Transverse colon (tissue), 4 donors: ENCODE measurements at regions of chr16 and their contacts with region 1.

Region 1: DNA sequence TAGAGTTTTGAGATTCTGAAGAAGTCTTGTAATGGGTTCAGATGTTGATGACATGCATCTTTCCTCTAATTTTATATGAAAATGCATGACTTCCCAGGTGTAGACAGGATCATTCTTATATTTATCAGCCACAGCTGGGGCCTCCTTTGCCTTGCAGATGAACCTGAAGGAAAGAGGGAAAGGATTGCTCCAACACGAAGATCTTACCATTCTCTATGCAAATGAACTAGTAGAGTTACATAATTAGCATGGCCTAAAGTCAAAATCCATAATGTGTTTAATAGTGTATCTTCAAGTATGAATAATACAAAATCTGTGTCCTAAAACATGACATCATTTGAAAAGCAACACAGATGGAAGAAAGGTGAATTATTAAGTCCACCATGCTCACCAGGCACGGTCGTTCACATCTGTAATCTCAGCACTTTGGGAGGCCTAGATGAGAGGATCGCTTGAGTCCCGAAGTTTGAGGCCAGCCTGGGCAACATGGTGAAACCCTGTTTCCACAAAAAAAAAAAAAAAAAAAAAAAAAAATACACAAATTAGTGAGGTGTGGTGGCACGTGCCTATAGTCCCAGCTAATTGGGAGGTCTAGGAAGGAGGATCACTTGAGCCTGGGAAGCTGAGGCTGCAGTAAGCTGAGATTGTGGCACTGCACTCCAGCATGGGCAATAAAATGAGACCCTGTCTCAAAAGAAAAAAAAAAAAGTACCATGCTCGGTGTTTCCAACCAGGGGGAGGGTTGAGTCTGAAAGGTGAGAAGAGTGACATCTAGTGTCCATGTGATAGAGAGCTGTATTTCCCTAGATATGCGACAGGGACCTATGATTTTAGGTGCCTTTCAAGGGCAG is 6.3 kb downstream of the VWA3A start:
- DNase-seq: no peak
- H3K4me3 ChIP-seq: no peak overlapping the region
- H3K27ac ChIP-seq: no peak overlapping the region
- H3K4me1 ChIP-seq: no peaks in the 10 kb centered on the region
- H3K27me3 ChIP-seq: no peaks in the 10 kb centered on the region
- CTCF ChIP-seq: peak; percentile 33 to 52 (median 49)
- EP300 ChIP-seq: no peak
- POLR2A ChIP-seq: no peak

Region 2: DNA sequence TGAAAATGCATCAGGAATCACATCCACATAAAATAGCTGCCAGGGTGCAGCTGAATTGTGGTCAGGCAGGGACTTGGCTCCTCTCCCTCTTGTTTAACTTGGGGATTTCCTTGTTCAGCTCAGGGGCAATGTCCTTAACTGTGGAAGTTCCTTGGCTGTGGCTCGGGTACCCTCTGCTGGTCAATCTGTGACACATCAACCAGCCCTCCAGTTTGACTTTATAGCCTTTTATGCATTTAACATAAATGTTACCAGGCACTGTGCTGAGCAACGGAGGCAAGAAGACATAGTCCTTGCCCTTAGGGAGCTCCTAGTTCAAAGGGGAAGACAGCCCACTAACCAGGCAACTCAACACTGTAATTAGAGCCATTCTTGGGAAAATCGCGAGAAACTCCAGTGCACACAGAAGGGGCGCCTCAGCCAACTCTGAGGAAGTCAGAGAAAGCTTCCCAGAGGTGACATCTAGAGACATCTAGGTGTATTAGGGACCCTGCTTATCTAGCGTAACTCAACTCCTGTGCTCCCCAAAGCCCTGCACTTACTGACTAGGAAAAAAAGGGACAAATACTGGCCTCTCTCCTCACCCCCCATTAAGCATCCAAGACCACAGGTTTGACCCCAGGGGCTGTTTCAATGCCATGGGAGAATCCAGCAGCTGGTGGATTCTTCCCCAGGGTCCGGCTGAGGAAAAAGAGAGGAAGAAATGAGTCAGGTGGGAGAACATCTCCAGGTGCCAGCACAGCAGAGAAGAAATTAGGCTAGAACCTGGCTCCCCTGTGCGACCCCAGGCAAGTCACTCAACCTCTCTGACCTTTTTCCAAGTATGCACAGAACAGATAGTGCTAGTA is 90.2 kb after region 1 on chr16:
- in situ Hi-C with region 1: loop called in 1 of 4 experiments (anchors 10 kb)
- intact Hi-C with region 1: no loop called
- DNase-seq: peak; percentile 82
- H3K4me3 ChIP-seq: peak overlapping the region in 1 of 4 donors; percentile 67
- H3K27ac ChIP-seq: peak overlapping the region; percentile 89 to 99 (median 96)
- H3K4me1 ChIP-seq: peaks cover 14 to 39% (median 26%) of the 10 kb centered on the region in 4 donors
- H3K27me3 ChIP-seq: no peaks in the 10 kb centered on the region
- CTCF ChIP-seq: peak; percentile 79 to 93 (median 83)
- EP300 ChIP-seq: no peak
- POLR2A ChIP-seq: no peak